ENCODE measurements at regions of chr2 and their contacts with region 1.

Region 1: GRCh38 chr2:24021193-24021998 is 11.5 kb downstream of the MFSD2B start:
- DNase-seq: peak; percentile 55 to 74 (median 73)
- ATAC-seq: peak; percentile 93
- H3K4me3 ChIP-seq: no peak overlapping the region
- H3K27ac ChIP-seq: no peak overlapping the region
- H3K4me1 ChIP-seq: peaks cover under 1 to 35% of the 10 kb centered on the region in 2 experiments; a peak in 4 of 5 replicates
- H3K27me3 ChIP-seq: no peaks in the 10 kb centered on the region
- CTCF ChIP-seq: peak; percentile 72 to 85 (median 78)
- EP300 ChIP-seq: no peak
- POLR2A ChIP-seq: no peak
- RAD21 ChIP-seq: peak; percentile 47 to 82

Region 2: DNA sequence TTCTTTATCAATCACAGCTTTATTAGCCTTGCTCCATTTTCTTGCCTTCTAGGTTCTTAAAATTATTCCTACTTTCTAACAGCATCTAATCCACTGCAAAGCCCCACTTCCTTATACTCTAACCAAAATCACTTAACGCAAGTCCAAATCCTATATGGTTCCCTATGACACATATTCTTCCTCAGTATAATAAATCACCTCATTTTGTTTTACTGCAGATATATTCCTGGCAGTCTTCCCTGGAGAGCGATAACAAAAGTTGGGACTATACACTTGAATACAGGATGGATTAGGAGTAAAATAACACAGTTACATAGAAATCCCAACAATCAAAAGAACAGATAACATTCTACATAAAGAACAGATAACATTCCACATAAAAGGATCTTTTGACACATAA is 239.3 kb before region 1 on chr2:
- CTCF ChIA-PET with region 1: no interaction called
- POLR2A ChIA-PET with region 1: no interaction called
- in situ Hi-C with region 1: no loop called
- intact Hi-C with region 1: no loop called
- DNase-seq: no peak
- ATAC-seq: no peak
- H3K4me3 ChIP-seq: no peak overlapping the region
- H3K27ac ChIP-seq: no peak overlapping the region
- H3K4me1 ChIP-seq: peaks cover 0 to 2% of the 10 kb centered on the region in 2 experiments; a peak in 2 of 5 replicates
- H3K27me3 ChIP-seq: no peaks in the 10 kb centered on the region
- CTCF ChIP-seq: no peak
- EP300 ChIP-seq: no peak
- POLR2A ChIP-seq: no peak
- RAD21 ChIP-seq: no peak

Region 3: DNA sequence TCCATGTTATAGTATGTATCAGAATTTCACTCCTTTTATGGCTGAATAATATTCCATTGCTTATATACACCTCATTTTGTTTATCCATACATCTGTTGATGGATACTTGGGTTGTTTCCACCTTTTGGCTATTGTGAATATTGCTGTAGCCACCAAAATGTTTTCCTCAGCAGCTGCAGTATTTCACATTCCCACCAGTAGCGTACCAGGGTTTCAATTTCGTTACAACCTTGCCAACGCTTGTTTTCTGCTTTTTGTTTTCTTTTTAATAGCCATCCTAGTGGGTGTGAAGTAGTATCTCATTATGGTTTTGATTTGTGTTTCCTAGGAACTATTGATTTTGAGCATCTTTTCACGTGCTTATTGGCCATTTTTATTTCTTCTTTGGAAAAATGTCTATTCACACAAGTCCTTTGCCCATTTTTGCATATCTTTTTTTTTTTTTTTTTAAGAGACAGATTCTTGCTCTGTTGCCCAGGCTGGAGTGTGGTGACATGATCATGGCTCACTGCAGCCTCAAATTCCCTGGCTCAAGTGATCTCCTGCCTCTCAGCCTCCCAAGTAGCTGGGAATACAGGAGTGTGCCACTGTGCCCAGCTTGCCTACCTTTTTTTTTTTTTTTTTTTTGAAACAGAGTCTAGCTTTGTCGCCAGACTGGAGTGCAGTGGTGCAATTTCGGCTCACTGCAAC is 66.9 kb before region 1 on chr2:
- CTCF ChIA-PET with region 1: no interaction called
- POLR2A ChIA-PET with region 1: no interaction called
- in situ Hi-C with region 1: no loop called
- intact Hi-C with region 1: no loop called
- DNase-seq: no peak
- ATAC-seq: no peak
- H3K4me3 ChIP-seq: no peak overlapping the region
- H3K27ac ChIP-seq: no peak overlapping the region
- H3K4me1 ChIP-seq: peaks cover 0 to 3% of the 10 kb centered on the region in 2 experiments; a peak in 2 of 5 replicates
- H3K27me3 ChIP-seq: no peaks in the 10 kb centered on the region
- CTCF ChIP-seq: no peak
- EP300 ChIP-seq: no peak
- POLR2A ChIP-seq: no peak
- RAD21 ChIP-seq: no peak

Region 4: GRCh38 chr2:24058564-24059271 is 37.3 kb after region 1 on chr2:
- CTCF ChIA-PET with region 1: no interaction called
- POLR2A ChIA-PET with region 1: no interaction called
- in situ Hi-C with region 1: no loop called
- intact Hi-C with region 1: loop called (anchors 5 kb)
- DNase-seq: no peak
- ATAC-seq: no peak
- H3K4me3 ChIP-seq: no peak overlapping the region
- H3K27ac ChIP-seq: no peak overlapping the region
- H3K4me1 ChIP-seq: no peaks in the 10 kb centered on the region
- H3K27me3 ChIP-seq: no peaks in the 10 kb centered on the region
- CTCF ChIP-seq: no peak
- EP300 ChIP-seq: no peak
- POLR2A ChIP-seq: no peak
- RAD21 ChIP-seq: no peak

Region 5: DNA sequence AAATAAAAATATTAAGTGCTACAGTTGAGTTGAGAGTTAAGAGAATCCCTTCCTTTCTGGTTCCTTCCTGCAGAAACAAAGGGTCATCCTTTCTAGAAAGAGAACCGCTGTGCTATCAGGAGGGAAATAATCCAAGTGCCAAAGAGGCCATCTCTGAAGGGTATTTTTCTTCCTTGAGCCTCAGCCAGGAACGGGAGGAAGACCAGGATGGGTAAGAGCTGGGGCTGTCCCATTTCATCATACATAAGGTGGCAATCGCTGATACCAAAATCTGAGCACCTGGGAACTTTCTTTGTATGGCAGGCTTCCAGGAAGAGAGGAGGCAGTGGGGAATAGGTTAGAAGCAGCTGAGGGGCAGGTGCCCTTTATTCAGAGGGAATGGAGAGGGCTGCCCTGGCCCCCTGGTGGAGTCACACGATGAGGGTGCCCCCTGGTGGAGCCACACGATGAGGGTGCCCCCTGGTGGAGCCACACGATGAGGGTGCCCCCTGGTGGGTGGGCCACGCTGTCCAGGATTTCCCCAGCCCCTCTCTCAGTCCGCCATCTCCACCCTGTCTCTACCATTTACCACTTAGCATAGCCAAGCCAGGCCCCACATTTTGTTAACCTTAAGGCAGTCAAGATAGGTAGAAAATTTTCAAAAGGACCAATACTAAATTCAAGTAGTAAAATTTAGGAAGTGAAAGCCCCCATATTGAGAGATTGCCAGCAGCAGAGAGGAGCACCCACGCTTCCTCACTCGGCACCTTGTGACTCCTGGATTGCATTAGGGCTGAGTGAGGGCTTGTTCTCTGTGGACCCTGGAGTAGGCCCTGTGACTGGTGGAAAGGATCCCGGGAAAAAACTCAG is 143.0 kb after region 1 on chr2:
- CTCF ChIA-PET with region 1: interaction called, 4 read pairs
- POLR2A ChIA-PET with region 1: interaction called, 3 read pairs
- in situ Hi-C with region 1: no loop called
- intact Hi-C with region 1: loop called (anchors 1 kb)
- DNase-seq: peak; percentile 58 to 78 (median 69)
- ATAC-seq: peak; percentile 97
- H3K4me3 ChIP-seq: no peak overlapping the region
- H3K27ac ChIP-seq: no peak overlapping the region
- H3K4me1 ChIP-seq: peaks cover 0 to 4% of the 10 kb centered on the region in 2 experiments; a peak in 1 of 5 replicates
- H3K27me3 ChIP-seq: peaks cover 2 to 16% of the 10 kb centered on the region in 2 experiments; a peak in 1 of 5 replicates
- CTCF ChIP-seq: peak; percentile 98 to 99 (median 99)
- EP300 ChIP-seq: no peak; the same call in 1 of the 2 replicates
- POLR2A ChIP-seq: no peak
- RAD21 ChIP-seq: peak; percentile 72 to 91

Region 6: GRCh38 chr2:24456599-24457556 is 435.5 kb after region 1 on chr2:
- CTCF ChIA-PET with region 1: no interaction called
- POLR2A ChIA-PET with region 1: no interaction called
- in situ Hi-C with region 1: no loop called
- intact Hi-C with region 1: no loop called
- DNase-seq: peak; percentile 76 to 85 (median 81)
- ATAC-seq: peak; percentile 95
- H3K4me3 ChIP-seq: no peak overlapping the region
- H3K27ac ChIP-seq: peak overlapping the region; percentile 52
- H3K4me1 ChIP-seq: peaks cover 23 to 41% of the 10 kb centered on the region in 2 experiments
- H3K27me3 ChIP-seq: no peaks in the 10 kb centered on the region; a peak in 1 of 5 replicates
- CTCF ChIP-seq: 0 out of 6 replicates have a peak, but pooled peaks of 1 of the 3 experiments have one; percentile 1
- EP300 ChIP-seq: peak; percentile 39; the same call in 1 of the 2 replicates
- POLR2A ChIP-seq: no peak
- RAD21 ChIP-seq: no peak